Naive thymus-derived CD4-positive, alpha-beta T cell (primary cell): ENCODE measurements at regions of chr16 and their contacts with region 1.

Region 1: DNA sequence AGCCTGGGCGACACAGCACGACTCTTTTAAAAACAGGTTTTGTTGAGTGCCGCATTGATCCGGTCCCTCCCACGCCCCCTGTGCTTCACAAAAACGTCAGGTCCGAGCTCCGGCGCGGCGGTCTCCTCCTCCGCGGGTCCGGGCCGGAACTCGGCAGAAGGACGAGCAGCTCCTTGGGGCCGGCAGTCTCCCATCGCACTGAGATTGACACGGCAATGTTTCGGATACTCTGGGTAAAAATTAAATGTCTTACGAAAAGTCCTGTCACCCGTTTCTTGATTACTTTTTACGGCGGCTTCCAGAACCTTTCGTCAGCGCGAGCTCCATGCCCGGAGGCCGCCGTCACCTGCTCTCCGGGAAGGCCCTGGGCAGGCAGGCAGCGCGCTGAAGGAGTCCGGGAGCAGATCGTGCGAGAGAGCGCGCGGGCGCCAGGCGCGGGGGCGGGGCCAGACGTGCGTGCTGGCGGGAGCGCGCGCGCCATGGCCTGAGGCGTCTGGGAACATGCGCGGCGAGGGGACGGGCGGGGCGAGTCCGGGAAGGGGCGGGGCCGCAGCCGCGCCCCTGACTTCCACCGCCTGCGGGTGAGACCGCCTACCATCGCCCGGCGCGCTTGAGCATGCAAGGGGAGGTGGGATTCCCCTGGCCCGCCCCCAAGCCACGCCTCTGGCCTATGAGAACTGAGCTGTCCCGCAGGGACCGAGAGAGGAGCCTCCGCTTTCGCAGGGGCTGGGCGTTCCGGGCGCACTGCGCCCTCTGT is 11.7 kb upstream of the SRL start:
- DNase-seq: peak; percentile 94 to 100 (median 100)
- ATAC-seq: peak; percentile 97
- H3K4me3 ChIP-seq: peak overlapping the region; percentile 92
- H3K4me3 Mint-ChIP-seq: peak overlapping the region; percentile 88 to 98 (median 96)
- H3K27ac ChIP-seq: peak overlapping the region; percentile 88
- H3K27ac Mint-ChIP-seq: peak overlapping the region; percentile 88 to 98 (median 96)
- H3K4me1 ChIP-seq: peaks cover 3 to 4% of the 10 kb centered on the region in 2 donors
- H3K4me1 Mint-ChIP-seq: peaks cover 0 to 16% (median 8%) of the 10 kb centered on the region in 7 donors
- H3K27me3 ChIP-seq: no peaks in the 10 kb centered on the region
- H3K27me3 Mint-ChIP-seq: no peaks in the 10 kb centered on the region

Region 2: DNA sequence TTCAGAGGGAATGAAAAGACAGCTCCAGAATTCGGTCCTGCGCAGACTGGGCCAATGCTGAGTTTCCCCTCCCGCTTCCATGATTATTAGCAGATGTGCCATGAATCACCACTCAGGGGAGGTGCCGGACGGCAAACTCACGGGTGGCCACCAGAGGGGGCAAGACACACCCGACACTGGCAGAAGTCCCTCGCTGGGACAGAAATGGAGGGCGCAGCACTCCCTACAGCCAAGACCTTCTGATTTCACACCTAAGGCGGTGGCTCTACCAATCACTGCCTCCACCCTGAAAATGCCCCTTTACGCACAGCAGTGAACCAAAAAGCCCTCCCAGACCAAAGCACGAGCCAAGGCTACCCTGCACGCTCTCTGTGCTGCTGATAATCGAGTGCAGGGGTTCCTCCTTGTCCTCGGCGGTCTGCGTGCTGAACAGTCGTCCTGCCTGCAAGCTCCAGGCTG is 563.1 kb before region 1 on chr16:
- CTCF ChIA-PET with region 1: no interaction called
- POLR2A ChIA-PET with region 1: no interaction called
- intact Hi-C with region 1: loop called (anchors 1 to 5 kb)
- DNase-seq: peak; percentile 65 to 81 (median 75)
- ATAC-seq: peak; percentile 100
- H3K4me3 ChIP-seq: no peak overlapping the region
- H3K4me3 Mint-ChIP-seq: peak overlapping the region in 5 of 10 donors; percentile 17 to 71 (median 42)
- H3K27ac ChIP-seq: no peak overlapping the region
- H3K27ac Mint-ChIP-seq: peak overlapping the region in 5 of 9 donors; percentile 6 to 61 (median 53)
- H3K4me1 ChIP-seq: peaks cover 3 to 7% of the 10 kb centered on the region in 2 donors
- H3K4me1 Mint-ChIP-seq: peaks cover 7 to 10% (median 9%) of the 10 kb centered on the region in 7 donors
- H3K27me3 ChIP-seq: no peaks in the 10 kb centered on the region
- H3K27me3 Mint-ChIP-seq: no peaks in the 10 kb centered on the region

Region 3: DNA sequence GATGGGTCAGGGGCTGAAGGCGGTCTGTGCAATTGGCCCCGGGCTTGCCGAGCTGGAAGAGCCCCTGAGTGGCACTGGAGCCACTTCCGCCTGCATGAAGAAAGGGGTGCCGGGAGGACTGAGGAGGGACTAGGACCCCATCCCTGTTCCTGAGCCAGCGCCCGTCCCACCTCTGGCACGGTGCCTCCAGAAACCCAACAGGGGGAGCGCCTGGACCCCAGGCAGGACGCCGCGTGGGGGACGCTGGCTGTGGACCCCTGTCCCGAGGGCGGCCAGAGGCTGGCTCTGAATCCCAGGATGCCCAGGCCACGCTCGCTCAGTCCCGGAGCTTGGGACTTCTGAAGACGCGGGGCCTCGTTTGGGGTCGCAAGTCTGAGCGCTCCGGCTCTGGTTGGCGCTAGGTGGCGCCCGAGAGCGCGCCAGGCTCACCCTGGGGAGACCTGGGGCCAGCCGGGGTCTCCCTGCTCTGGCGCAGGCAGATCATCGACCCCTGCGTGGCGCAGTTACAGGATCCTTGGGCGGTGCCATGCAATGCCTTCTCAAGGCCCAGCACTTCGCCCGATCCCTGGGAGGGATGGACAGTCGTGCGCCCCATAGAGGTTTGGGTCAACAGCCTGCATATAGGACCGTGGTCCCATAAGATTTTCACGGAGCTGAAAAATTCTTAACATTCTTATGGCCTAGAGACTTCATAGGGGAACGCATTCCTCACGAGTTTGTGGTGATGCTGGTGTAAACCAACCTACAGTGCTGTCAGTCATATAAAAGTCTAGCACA is 314.5 kb before region 1 on chr16:
- CTCF ChIA-PET with region 1: interaction called, 9 read pairs
- POLR2A ChIA-PET with region 1: interaction called, 3 read pairs
- intact Hi-C with region 1: loop called (anchors 1 kb)
- DNase-seq: peak; percentile 39 to 79 (median 63)
- ATAC-seq: peak; percentile 89
- H3K4me3 ChIP-seq: peak overlapping the region; percentile 35
- H3K4me3 Mint-ChIP-seq: peak overlapping the region; percentile 5 to 75 (median 52)
- H3K27ac ChIP-seq: no peak overlapping the region
- H3K27ac Mint-ChIP-seq: no peak overlapping the region
- H3K4me1 ChIP-seq: no peaks in the 10 kb centered on the region
- H3K4me1 Mint-ChIP-seq: peaks cover 0 to 4% (median 0%) of the 10 kb centered on the region in 7 donors
- H3K27me3 ChIP-seq: no peaks in the 10 kb centered on the region
- H3K27me3 Mint-ChIP-seq: peaks cover 0 to 7% (median 0%) of the 10 kb centered on the region in 5 donors

Region 4: GRCh38 chr16:4116337-4117249 is 137.0 kb before region 1 on chr16 and contains the start of gene ADCY9:
- CTCF ChIA-PET with region 1: no interaction called
- POLR2A ChIA-PET with region 1: interaction called, 7 read pairs
- intact Hi-C with region 1: loop called (anchors 1 kb)
- DNase-seq: peak; percentile 67 to 89 (median 78)
- ATAC-seq: peak; percentile 95
- H3K4me3 ChIP-seq: peak within 1 kb of the TSS; percentile 65
- H3K4me3 Mint-ChIP-seq: peak within 1 kb of the TSS; percentile 79 to 94 (median 88)
- H3K27ac ChIP-seq: peak within 1 kb of the TSS; percentile 14
- H3K27ac Mint-ChIP-seq: peak within 1 kb of the TSS in 8 of 9 donors; percentile 25 to 82 (median 70)
- H3K4me1 ChIP-seq: peaks cover 13 to 19% of the 10 kb centered on the region in 2 donors
- H3K4me1 Mint-ChIP-seq: peaks cover 31 to 41% (median 38%) of the 10 kb centered on the region in 7 donors
- H3K27me3 ChIP-seq: no peaks in the 10 kb centered on the region
- H3K27me3 Mint-ChIP-seq: peaks cover 0 to 26% (median 0%) of the 10 kb centered on the region in 5 donors
- total RNA-seq, gene ADCY9: 3.9 to 14.3 (median 5.6) TPM

Region 5: GRCh38 chr16:4271176-4272066 is 17.8 kb after region 1 on chr16:
- CTCF ChIA-PET with region 1: interaction called, 39 read pairs
- POLR2A ChIA-PET with region 1: interaction called, 65 read pairs
- intact Hi-C with region 1: loop called (anchors 1 kb)
- DNase-seq: peak; percentile 68 to 90 (median 84)
- ATAC-seq: peak; percentile 89
- H3K4me3 ChIP-seq: peak overlapping the region; percentile 99
- H3K4me3 Mint-ChIP-seq: peak overlapping the region; percentile 85 to 97 (median 92)
- H3K27ac ChIP-seq: peak overlapping the region; percentile 58
- H3K27ac Mint-ChIP-seq: peak overlapping the region; percentile 67 to 98 (median 83)
- H3K4me1 ChIP-seq: peaks cover 5 to 13% of the 10 kb centered on the region in 2 donors
- H3K4me1 Mint-ChIP-seq: peaks cover 8 to 23% (median 15%) of the 10 kb centered on the region in 7 donors
- H3K27me3 ChIP-seq: no peaks in the 10 kb centered on the region
- H3K27me3 Mint-ChIP-seq: no peaks in the 10 kb centered on the region

Region 6: GRCh38 chr16:4350787-4351659 is 97.5 kb after region 1 on chr16 and contains the start of gene PAM16:
- CTCF ChIA-PET with region 1: no interaction called
- POLR2A ChIA-PET with region 1: interaction called, 5 read pairs
- intact Hi-C with region 1: loop called in 1 of 2 experiments (anchors 1 kb)
- DNase-seq: peak; percentile 95 to 99 (median 98)
- ATAC-seq: peak; percentile 93
- H3K4me3 ChIP-seq: peak within 1 kb of the TSS; percentile 91
- H3K4me3 Mint-ChIP-seq: peak within 1 kb of the TSS; percentile 90 to 98 (median 94)
- H3K27ac ChIP-seq: peak within 1 kb of the TSS; percentile 87
- H3K27ac Mint-ChIP-seq: peak within 1 kb of the TSS; percentile 76 to 95 (median 92)
- H3K4me1 ChIP-seq: peaks cover 5 to 7% of the 10 kb centered on the region in 2 donors
- H3K4me1 Mint-ChIP-seq: peaks cover 11 to 38% (median 32%) of the 10 kb centered on the region in 7 donors
- H3K27me3 ChIP-seq: no peaks in the 10 kb centered on the region
- H3K27me3 Mint-ChIP-seq: no peaks in the 10 kb centered on the region
- total RNA-seq, gene PAM16: 34.1 to 46.2 (median 45.0) TPM

Region 7: DNA sequence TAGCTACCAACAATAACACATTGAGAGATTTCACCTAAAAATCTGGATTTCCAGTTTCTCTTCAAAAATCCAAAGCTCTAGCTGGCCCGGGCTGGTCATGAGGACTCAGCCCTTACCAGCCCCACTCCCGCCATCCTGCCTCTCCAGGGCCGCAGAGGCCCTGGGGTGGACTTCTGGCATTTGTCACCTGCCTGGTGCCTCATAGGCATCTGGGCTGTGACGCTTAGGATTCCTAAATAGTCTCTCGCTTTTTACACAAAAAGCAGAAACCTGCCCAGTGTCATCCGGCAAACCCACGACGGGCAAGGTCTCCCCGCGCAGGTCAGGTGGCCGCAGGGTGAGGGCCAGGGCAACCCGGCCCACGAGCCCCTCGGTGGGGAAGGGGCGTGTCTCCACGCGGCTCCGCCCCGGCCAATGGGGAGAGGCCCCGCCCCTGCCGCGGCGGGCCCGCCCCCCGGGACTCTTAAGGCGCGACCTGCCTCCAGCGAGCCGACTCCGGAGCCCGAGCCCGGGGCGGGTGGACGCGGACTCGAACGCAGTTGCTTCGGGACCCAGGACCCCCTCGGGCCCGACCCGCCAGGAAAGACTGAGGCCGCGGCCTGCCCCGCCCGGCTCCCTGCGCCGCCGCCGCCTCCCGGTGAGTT is 117.9 kb after region 1 on chr16 and contains the start of gene VASN:
- CTCF ChIA-PET with region 1: no interaction called
- POLR2A ChIA-PET with region 1: no interaction called
- intact Hi-C with region 1: no loop called
- DNase-seq: peak; percentile 68 to 84 (median 78)
- ATAC-seq: peak; percentile 89
- H3K4me3 ChIP-seq: peak within 1 kb of the TSS; percentile 51
- H3K4me3 Mint-ChIP-seq: peak within 1 kb of the TSS; percentile 61 to 88 (median 81)
- H3K27ac ChIP-seq: peak within 1 kb of the TSS; percentile 58
- H3K27ac Mint-ChIP-seq: peak within 1 kb of the TSS in 6 of 9 donors; percentile 43 to 74 (median 66)
- H3K4me1 ChIP-seq: peaks cover 15 to 19% of the 10 kb centered on the region in 2 donors
- H3K4me1 Mint-ChIP-seq: peaks cover 0 to 24% (median 12%) of the 10 kb centered on the region in 7 donors
- H3K27me3 ChIP-seq: no peaks in the 10 kb centered on the region
- H3K27me3 Mint-ChIP-seq: no peaks in the 10 kb centered on the region
- total RNA-seq, gene VASN: 0.24 to 1.3 (median 0.45) TPM in 4 of 5 experiments, not detected in the other

Region 8: GRCh38 chr16:4556112-4556511 is 302.5 kb after region 1 on chr16 and contains the start of gene C16orf96:
- CTCF ChIA-PET with region 1: no interaction called
- POLR2A ChIA-PET with region 1: no interaction called
- intact Hi-C with region 1: no loop called
- DNase-seq: no peak
- ATAC-seq: no peak
- H3K4me3 ChIP-seq: no peak within 1 kb of the TSS
- H3K4me3 Mint-ChIP-seq: no peak within 1 kb of the TSS
- H3K27ac ChIP-seq: no peak within 1 kb of the TSS
- H3K27ac Mint-ChIP-seq: peak within 1 kb of the TSS in 1 of 9 donors; percentile 17
- H3K4me1 ChIP-seq: no peaks in the 10 kb centered on the region
- H3K4me1 Mint-ChIP-seq: no peaks in the 10 kb centered on the region
- H3K27me3 ChIP-seq: no peaks in the 10 kb centered on the region
- H3K27me3 Mint-ChIP-seq: peaks cover 0 to 8% (median 0%) of the 10 kb centered on the region in 5 donors
- total RNA-seq, gene C16orf96: 0.17 to 0.70 (median 0.64) TPM